Colonic mucosa (tissue), 4 donors: ENCODE measurements at regions of chr19 and their contacts with region 1.

Region 1: DNA sequence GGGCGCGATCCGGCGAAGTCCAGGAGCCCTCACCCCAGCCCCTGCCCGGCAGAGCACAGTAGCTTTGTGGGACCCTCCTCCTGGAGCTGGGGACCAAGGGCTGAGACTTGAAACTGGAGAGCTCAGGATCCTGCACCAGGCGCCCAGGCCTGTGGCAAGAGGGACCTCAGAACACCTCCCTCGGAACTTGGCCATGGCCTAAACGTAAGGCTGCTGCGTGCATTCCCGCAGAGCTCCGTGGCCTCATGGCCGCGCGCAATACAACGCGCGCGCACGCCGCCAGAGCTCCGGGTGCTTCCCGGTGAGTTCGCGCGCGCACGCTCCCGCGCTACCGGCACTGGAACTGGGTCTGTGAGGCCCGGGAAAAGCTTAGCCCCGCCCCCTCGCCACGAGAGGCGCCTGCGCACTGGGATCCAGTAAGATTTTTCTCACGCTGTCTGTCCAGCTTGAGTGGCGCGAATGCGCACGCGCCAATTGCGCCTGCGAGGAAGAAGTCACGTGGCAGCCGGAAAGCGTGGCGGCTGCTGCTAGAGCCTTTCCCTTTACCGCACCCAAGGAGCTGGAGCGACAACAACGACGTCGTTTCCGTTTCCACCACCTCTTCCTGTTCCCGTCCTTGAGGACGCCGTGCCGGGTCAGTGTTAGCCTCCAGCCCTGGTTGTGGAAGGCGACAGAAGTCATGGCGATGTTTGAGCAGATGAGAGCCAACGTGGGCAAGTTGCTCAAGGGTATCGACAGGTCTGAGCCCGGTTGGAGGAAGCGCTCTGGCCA is at the start of gene EIF3K:
- DNase-seq: peak; percentile 100
- H3K4me3 ChIP-seq: peak within 1 kb of the TSS; percentile 97
- H3K27ac ChIP-seq: peak within 1 kb of the TSS; percentile 78
- H3K4me1 ChIP-seq: peaks cover 7% of the 10 kb centered on the region
- H3K27me3 ChIP-seq: no peaks in the 10 kb centered on the region
- CTCF ChIP-seq: no peak
- total RNA-seq, gene EIF3K: 367 to 445 TPM

Region 2: GRCh38 chr19:38402967-38403861 is 215.6 kb before region 1 on chr19 and contains the start of gene FAM98C:
- intact Hi-C with region 1: loop called (anchors 10 kb)
- DNase-seq: peak; percentile 97
- H3K4me3 ChIP-seq: peak within 1 kb of the TSS; percentile 97
- H3K27ac ChIP-seq: peak within 1 kb of the TSS; percentile 84
- H3K4me1 ChIP-seq: peaks cover 7% of the 10 kb centered on the region
- H3K27me3 ChIP-seq: no peaks in the 10 kb centered on the region
- CTCF ChIP-seq: peak; percentile 99
- total RNA-seq, gene FAM98C: 31.4 to 35.4 TPM

Region 3: DNA sequence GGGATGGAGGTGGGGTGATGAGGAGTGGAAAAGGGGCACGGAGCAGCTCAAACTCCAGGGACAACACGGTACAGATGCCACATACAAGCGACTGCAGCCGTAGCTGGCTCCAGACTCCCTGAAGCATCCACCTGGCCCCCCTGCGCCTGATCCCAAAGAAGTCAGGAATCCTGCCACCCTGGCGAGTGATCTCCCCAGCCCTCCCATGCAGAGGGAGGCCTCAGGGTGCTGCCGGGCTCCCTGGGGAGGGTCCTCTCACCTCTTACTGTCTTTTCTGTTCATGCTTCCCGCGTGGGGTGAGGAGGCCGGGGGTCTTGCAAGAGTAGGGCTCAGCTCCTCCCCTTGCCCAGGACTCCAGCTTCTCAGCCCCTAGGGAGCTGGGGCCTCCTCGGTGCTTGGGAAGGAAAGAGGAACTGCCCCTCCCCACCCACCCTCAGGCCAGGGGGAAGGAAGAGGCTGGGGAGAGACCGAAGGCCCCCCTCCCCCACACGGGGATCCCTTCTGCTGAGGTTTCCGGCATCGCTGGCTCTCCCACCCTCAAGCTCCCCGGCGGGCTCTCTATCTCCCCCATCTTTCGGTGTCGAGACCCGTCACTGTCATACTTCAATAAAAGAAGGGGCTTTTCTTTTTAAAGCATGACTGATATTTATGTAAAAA is 192.8 kb before region 1 on chr19 and contains the start of gene RASGRP4:
- intact Hi-C with region 1: no loop called
- DNase-seq: peak; percentile 32
- H3K4me3 ChIP-seq: peak within 1 kb of the TSS; percentile 5
- H3K27ac ChIP-seq: no peak within 1 kb of the TSS
- H3K4me1 ChIP-seq: no peaks in the 10 kb centered on the region
- H3K27me3 ChIP-seq: no peaks in the 10 kb centered on the region
- CTCF ChIP-seq: no peak
- total RNA-seq, gene RASGRP4: 0.84 to 0.90 TPM